H1 (cell line): ENCODE measurements at regions of chr13 and their contacts with region 1.

Region 1: DNA sequence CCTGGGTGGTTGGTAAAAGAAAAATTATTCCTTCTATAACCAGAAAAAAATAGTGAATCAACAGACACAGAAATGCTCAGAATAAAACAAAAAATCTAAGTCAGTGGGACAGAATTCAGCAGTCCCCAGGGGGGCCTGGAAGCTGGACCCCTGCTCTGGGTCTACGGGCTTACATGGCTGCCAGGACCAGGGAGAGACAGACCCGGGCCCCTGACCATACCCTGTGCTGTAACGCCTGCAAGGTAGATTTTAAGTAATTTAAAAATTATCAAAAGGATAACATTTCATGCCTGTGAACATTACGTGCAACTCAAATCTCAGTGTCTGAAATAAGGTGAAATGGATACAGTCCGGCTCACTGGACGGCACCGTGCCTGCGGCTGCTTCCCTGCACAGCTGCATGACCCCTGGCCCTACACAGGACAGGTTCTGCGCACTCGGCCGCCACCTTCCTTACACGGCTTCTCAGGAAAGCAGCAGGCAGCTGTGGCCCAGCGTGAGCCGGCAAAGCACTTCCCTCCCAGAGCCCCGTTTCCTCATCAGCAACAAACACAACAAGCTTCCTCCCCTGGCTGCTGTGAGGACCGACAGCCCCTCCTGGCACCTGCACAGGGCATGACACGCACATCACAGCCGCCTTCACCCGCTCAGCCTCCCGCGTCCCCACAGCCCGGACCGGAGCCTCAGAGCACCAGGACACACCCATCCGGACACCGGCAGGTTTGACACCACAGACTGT is 22.2 kb downstream of the RASA3 start:
- DNase-seq: no peak
- H3K4me3 ChIP-seq: no peak overlapping the region
- H3K27ac ChIP-seq: no peak overlapping the region
- H3K4me1 ChIP-seq: peaks cover 4 to 34% (median 27%) of the 10 kb centered on the region in 4 experiments
- H3K27me3 ChIP-seq: no peaks in the 10 kb centered on the region
- CTCF ChIP-seq: peak in 2 of 3 experiments; percentile 35 to 62; a peak in 3 of 4 replicates
- EP300 ChIP-seq: no peak
- POLR2A ChIP-seq: no peak
- RAD21 ChIP-seq: peak; percentile 69 to 71

Region 2: DNA sequence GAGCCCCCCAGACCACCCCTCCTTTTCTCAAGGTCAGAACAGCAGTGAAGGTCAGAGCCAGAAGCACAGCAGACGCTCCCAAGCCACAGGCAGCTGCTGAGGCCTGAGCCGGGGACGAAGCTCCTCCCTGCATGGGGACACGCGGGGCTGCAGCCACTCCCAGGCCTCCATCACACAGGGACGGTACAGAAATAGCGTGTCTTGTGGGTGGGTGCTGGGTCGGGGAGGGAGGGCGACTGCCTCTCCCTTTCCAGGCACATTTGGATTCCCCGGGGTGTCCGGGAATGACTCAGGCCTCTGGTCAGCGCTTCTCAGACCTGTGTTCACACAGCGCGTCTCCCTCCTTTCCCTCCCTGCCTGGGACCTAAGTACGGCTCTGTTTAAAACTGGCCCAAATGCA is 11.1 kb before region 1 on chr13:
- CTCF ChIA-PET with region 1: interaction called, 8 read pairs
- POLR2A ChIA-PET with region 1: interaction called, 10 read pairs
- DNase-seq: no peak
- H3K4me3 ChIP-seq: no peak overlapping the region
- H3K27ac ChIP-seq: no peak overlapping the region; the same call in 1 of the 2 replicates
- H3K4me1 ChIP-seq: peaks cover 0 to 9% (median 3%) of the 10 kb centered on the region in 4 experiments; a peak in 4 of 7 replicates
- H3K27me3 ChIP-seq: no peaks in the 10 kb centered on the region
- CTCF ChIP-seq: no peak
- EP300 ChIP-seq: no peak
- POLR2A ChIP-seq: no peak
- RAD21 ChIP-seq: no peak